ENCODE measurements at regions of chr18 and their contacts with region 1.

Region 1: GRCh38 chr18:49858309-49859020 is 45.1 kb upstream of the ACAA2 start:
- DNase-seq: peak; percentile 65
- ATAC-seq: peak; percentile 71 to 82

Region 2: DNA sequence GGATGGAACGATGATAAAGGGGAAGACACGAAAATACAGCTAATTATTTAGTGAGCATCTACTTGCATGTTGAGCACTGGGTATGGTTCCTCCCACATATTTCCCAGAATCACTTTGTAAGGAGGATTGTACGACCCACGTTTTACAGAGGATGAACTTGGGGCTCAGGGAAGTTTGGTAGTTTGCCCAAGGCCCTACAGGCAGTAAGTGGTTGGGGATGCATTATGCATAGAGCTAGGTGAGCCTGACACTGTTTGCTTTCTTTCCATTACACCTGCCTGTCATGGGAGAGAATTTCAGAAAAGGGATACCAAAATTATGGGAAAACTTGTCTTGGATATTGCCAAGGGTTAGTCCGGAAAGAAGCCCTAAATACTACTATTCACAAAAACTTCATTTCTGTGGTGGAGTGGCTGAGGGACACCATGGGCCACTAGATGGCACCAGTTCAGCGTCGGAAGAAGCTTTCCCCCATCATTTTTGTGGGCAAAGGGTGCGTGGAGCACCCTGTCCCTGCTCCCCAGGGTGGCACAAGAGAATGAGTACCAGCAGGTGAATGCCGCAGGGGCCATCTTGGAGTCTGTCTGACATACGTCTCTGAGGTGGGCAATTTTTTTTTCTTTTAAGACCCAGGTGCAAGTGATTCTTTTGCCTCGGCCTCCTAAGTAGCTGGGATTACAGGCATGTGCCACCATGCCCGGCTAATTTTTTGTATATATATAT is 347.9 kb before region 1 on chr18:
- intact Hi-C with region 1: loop called (anchors 2 to 5 kb)
- DNase-seq: peak; percentile 33
- ATAC-seq: peak; percentile 59 to 73

Region 3: DNA sequence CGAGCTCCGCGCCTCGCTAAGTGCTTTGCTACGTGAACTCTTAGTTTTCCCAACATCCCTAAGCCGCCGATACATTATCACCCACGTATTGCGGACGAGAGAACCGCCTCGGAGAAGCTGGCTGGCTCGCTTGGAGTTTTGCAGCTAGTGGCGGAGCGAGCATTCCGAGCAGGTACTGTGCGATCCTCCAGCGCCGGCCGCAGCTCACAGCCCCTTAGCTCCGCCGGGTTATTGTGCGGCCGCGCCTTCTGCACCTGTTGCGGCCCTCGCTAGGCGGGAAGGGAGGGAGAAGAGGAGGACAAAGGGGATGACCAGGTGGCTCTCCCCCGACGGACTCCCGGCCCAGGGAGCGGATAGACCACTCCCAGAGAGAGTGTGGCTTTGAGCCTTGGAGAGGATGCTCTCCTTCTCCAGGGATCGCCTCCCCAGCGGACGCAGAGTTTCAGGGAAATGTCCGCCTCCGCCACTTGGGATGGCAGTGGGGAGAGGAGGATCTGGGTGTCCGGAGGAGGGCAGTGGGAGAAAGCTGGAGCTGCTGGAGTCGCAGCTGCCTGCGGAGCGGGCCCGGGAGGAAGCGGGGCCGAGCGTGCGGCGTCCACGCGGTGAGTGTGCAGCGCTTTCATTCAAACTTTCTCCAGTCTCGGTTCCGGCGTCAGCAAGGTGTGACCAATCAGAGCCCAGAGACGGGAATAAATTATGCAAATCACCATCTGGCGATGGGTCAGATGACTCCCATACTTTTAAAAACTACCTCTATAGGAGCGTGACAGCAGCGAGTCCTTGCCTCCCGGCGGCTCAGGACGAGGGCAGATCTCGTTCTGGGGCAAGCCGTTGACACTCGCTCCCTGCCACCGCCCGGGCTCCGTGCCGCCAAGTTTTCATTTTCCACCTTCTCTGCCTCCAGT is 296.9 kb before region 1 on chr18 and contains the start of gene LIPG:
- intact Hi-C with region 1: loop called in 1 of 2 experiments (anchors 2 kb)
- DNase-seq: peak; percentile 29
- ATAC-seq: peak; percentile 72 to 85
- total RNA-seq, gene LIPG: 0.09 to 1.6 TPM

Region 4: GRCh38 chr18:49731860-49732311 is 126.6 kb before region 1 on chr18:
- intact Hi-C with region 1: loop called in 1 of 2 experiments (anchors 10 kb)
- DNase-seq: no peak
- ATAC-seq: no peak

Region 5: DNA sequence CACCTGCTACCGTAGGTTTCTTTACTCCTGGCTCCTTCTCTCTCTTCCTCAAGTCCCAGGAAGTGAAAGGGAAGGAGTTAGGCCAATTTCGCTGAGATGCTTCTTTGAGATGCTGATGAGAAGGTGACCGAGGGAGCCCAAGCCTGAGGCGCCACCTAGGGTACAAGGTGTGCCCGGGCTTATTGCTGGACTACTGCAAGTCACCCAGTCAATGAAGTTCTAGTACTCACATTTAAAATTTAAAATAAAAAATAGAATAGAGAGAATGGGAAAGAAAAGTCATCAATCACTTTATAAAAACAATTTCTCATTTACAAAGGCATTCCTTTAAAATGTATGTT is 90.4 kb before region 1 on chr18:
- intact Hi-C with region 1: no loop called
- DNase-seq: no peak
- ATAC-seq: peak; percentile 57 to 72

Region 6: GRCh38 chr18:49795612-49796552 is 62.6 kb before region 1 on chr18:
- intact Hi-C with region 1: loop called in 1 of 2 experiments (anchors 5 kb)
- DNase-seq: no peak
- ATAC-seq: no peak

Region 7: GRCh38 chr18:49907346-49907929 is 49.0 kb after region 1 on chr18:
- intact Hi-C with region 1: no loop called
- DNase-seq: no peak
- ATAC-seq: peak in 1 of 2 donors; percentile 57

Measured in left cardiac atrium (tissue), 4 donors.